Mammary epithelial cell (primary cell): ENCODE measurements at regions of chr11 and their contacts with region 1.

Region 1: GRCh38 chr11:33941637-33942160 is 49.8 kb upstream of the LMO2 start:
- DNase-seq: no peak
- H3K4me3 ChIP-seq: no peak overlapping the region
- H3K27ac ChIP-seq: no peak overlapping the region
- H3K4me1 ChIP-seq: peaks cover 4% of the 10 kb centered on the region
- H3K27me3 ChIP-seq: no peaks in the 10 kb centered on the region
- CTCF ChIP-seq: no peak

Region 2: GRCh38 chr11:33893711-33894397 is 47.8 kb before region 1 on chr11:
- CTCF ChIA-PET with region 1: no interaction called
- dilution Hi-C with region 1: no loop called
- in situ Hi-C with region 1: no loop called
- intact Hi-C with region 1: loop called (anchors 2 kb)
- DNase-seq: no peak
- H3K4me3 ChIP-seq: no peak overlapping the region
- H3K27ac ChIP-seq: no peak overlapping the region
- H3K4me1 ChIP-seq: peaks cover 21% of the 10 kb centered on the region
- H3K27me3 ChIP-seq: no peaks in the 10 kb centered on the region
- CTCF ChIP-seq: no peak

Region 3: DNA sequence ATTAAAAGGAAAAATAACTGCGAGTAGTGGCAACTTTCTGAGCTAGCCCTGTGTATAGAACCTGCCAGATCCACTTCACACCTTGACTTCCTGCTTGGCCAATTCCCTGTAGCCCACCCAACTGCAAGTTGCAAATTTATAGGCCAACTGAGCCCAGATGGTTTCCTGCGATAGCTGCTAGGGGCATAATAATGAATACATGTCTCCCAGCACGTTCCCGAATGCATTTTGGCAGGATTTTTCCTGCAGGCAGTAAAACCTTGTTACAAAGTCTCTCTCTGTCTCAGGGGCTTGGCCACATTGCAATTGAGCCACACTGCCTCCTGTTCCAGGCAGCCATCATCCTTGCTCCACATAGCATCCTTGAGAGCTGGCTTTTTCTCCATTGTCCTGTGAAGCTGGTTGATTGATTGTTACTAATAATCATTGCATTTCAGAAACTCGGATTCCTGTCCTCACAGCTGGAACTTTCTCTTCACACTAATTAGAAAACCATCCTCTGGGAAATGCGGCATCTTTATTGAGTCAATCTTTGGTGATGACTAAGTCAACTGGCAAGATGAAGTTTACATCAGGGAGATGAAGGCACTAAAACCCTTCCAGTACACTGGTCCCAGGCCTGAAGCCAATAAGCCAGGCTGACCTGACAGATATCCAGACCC is 31.3 kb before region 1 on chr11:
- CTCF ChIA-PET with region 1: no interaction called
- dilution Hi-C with region 1: no loop called
- in situ Hi-C with region 1: no loop called
- intact Hi-C with region 1: no loop called
- DNase-seq: no peak
- H3K4me3 ChIP-seq: no peak overlapping the region
- H3K27ac ChIP-seq: no peak overlapping the region
- H3K4me1 ChIP-seq: peaks cover 3% of the 10 kb centered on the region
- H3K27me3 ChIP-seq: peaks cover 5% of the 10 kb centered on the region
- CTCF ChIP-seq: no peak

Region 4: GRCh38 chr11:34512840-34513681 is 571.4 kb after region 1 on chr11:
- CTCF ChIA-PET with region 1: no interaction called
- dilution Hi-C with region 1: no loop called
- in situ Hi-C with region 1: no loop called
- intact Hi-C with region 1: no loop called
- DNase-seq: peak; percentile 29
- H3K4me3 ChIP-seq: no peak overlapping the region
- H3K27ac ChIP-seq: no peak overlapping the region
- H3K4me1 ChIP-seq: no peaks in the 10 kb centered on the region
- H3K27me3 ChIP-seq: no peaks in the 10 kb centered on the region
- CTCF ChIP-seq: peak; percentile 88 to 92